Activated CD4-positive, alpha-beta T cell treated with anti-CD3 and anti-CD28 coated beads for 36 hours (primary cell): ENCODE measurements at regions of chr20 and their contacts with region 1.

Region 1: GRCh38 chr20:8131598-8132483 is at the start of gene PLCB1:
- DNase-seq: peak; percentile 89
- ATAC-seq: peak; percentile 90
- H3K4me3 Mint-ChIP-seq: peak within 1 kb of the TSS; percentile 68
- H3K27ac Mint-ChIP-seq: no peak within 1 kb of the TSS
- H3K4me1 Mint-ChIP-seq: peaks cover 17% of the 10 kb centered on the region
- H3K27me3 Mint-ChIP-seq: peaks cover 30% of the 10 kb centered on the region
- total RNA-seq, gene PLCB1: 1.4 to 1.5 TPM

Region 2: GRCh38 chr20:8019246-8019997 is 112.4 kb before region 1 on chr20 and contains the start of gene TMX4:
- CTCF ChIA-PET with region 1: no interaction called
- POLR2A ChIA-PET with region 1: no interaction called
- intact Hi-C with region 1: loop called in 1 of 2 experiments (anchors 2 kb)
- DNase-seq: peak; percentile 94
- ATAC-seq: peak; percentile 84
- H3K4me3 Mint-ChIP-seq: peak within 1 kb of the TSS; percentile 85
- H3K27ac Mint-ChIP-seq: peak within 1 kb of the TSS; percentile 75
- H3K4me1 Mint-ChIP-seq: peaks cover 24% of the 10 kb centered on the region
- H3K27me3 Mint-ChIP-seq: no peaks in the 10 kb centered on the region
- total RNA-seq, gene TMX4: 19.2 to 25.9 TPM

Region 3: DNA sequence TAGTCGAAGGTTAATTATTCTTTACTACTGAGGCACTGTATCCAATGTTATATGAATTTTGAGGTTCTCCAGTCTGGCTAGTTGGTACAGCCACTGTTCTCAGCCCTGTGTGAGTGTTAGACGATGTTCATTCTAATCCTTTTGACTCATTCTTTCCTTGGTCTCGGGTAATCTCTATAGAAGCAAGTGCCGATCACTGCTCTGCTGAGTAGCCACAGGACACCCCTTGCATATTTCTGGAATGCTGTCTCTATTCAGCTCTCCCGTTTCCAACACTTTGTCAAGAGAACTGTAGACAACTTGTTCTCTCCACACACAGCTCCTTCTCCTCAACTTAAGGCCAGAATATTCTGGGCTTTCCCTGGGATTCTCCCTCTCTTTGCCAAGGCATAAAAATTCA is 42.2 kb before region 1 on chr20:
- CTCF ChIA-PET with region 1: no interaction called
- POLR2A ChIA-PET with region 1: no interaction called
- intact Hi-C with region 1: no loop called
- DNase-seq: no peak
- ATAC-seq: no peak
- H3K4me3 Mint-ChIP-seq: no peak overlapping the region
- H3K27ac Mint-ChIP-seq: no peak overlapping the region
- H3K4me1 Mint-ChIP-seq: no peaks in the 10 kb centered on the region
- H3K27me3 Mint-ChIP-seq: peaks cover 6% of the 10 kb centered on the region

Region 4: GRCh38 chr20:8213831-8214587 is 82.2 kb after region 1 on chr20:
- CTCF ChIA-PET with region 1: no interaction called
- POLR2A ChIA-PET with region 1: no interaction called
- intact Hi-C with region 1: loop called in 1 of 2 experiments (anchors 5 kb)
- DNase-seq: peak; percentile 13
- ATAC-seq: peak; percentile 81
- H3K4me3 Mint-ChIP-seq: peak overlapping the region; percentile 53
- H3K27ac Mint-ChIP-seq: peak overlapping the region; percentile 80
- H3K4me1 Mint-ChIP-seq: peaks cover 55% of the 10 kb centered on the region
- H3K27me3 Mint-ChIP-seq: no peaks in the 10 kb centered on the region

Region 5: DNA sequence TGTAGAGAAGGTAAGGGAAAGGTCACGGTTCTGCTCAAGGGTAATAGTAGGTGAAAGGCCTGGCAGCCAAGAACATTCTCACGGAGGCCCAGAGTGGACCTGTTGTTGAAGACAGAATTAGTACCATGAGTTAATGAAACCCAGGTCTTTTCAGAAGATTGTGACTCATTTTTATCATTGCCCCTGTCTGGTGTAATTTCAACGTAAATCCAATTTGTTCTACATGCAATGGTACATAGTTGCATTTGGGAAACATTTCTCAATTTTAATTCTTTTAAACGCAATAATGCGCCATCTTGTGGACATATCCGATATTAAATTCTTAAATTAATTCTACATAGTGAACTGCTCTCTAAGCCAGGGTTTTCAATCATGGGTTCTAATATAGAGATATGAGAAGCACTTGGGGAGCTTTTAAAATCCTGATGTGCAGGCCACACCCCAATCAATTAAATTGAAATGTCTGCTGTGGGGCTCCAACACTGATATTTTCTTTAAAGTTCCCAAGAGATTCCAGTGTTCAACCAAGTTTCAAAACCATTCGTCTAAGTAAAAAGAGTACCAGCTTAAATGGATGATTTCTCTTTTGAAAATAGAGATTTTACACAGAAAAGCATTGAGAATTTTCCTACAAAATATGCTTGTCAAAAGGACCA is 257.7 kb after region 1 on chr20:
- CTCF ChIA-PET with region 1: interaction called, 13 read pairs
- POLR2A ChIA-PET with region 1: no interaction called
- intact Hi-C with region 1: loop called (anchors 1 kb)
- DNase-seq: no peak
- ATAC-seq: no peak
- H3K4me3 Mint-ChIP-seq: no peak overlapping the region
- H3K27ac Mint-ChIP-seq: no peak overlapping the region
- H3K4me1 Mint-ChIP-seq: no peaks in the 10 kb centered on the region
- H3K27me3 Mint-ChIP-seq: peaks cover 2% of the 10 kb centered on the region

Region 6: DNA sequence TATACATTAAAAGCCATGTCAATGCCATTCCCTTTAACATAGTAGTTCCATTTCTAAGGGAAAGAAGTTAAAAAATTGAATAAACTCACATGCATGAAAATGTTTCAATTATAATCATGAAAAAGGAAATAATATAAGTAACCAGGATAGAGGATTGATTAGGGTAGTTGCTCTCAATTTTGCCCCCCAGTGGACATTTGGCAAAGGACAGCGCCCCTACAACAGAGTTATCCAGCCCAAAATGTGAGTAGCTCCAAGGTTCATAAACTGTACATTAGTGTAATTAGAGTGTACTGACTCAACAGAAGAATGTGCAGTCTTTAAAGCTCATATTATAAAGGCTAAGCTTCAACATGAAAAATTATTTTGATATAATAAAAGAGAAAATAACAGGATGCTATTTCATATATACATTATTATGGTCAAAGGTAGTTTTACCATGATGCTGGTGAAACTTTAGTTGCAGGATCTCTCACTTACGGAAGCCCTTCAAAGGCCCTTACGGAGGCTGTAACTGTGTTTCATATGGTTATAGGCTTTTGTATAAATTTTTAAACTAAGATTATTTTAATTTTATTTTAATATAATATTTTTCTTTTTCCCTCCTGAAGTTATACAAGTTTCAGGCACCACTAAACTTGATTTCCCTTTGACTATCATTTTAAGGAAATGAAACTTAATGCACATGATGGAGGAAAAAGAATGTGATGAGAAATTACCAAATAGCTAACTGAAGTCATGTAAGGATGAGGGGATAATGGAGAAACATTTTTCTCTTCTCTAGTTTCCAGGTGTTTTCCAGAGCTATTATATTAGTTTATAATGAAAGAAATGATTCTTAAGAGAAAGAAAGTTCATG is 403.8 kb after region 1 on chr20:
- CTCF ChIA-PET with region 1: no interaction called
- POLR2A ChIA-PET with region 1: no interaction called
- intact Hi-C with region 1: loop called in 1 of 2 experiments (anchors 5 kb)
- DNase-seq: peak; percentile 16
- ATAC-seq: no peak
- H3K4me3 Mint-ChIP-seq: no peak overlapping the region
- H3K27ac Mint-ChIP-seq: no peak overlapping the region
- H3K4me1 Mint-ChIP-seq: no peaks in the 10 kb centered on the region
- H3K27me3 Mint-ChIP-seq: no peaks in the 10 kb centered on the region

Region 7: DNA sequence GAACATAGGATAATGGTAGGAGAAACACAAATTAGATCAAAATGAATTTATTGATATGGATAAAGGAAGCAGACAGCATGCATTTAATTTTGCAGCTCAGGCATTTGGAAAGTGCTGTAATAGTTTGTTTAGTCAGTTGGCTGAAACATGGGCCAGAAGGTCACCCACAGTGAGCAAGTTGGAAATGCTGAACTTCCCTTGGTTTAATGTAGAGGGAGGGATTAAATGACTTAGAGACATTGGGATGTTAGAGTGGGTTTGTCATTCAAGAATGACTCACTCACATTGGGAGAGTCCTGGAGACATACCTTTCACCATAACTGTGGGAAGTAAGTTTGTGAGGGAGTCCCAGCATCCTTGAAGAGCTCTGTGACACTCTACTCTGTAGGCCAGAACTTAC is 705.6 kb after region 1 on chr20:
- CTCF ChIA-PET with region 1: no interaction called
- POLR2A ChIA-PET with region 1: no interaction called
- intact Hi-C with region 1: no loop called
- DNase-seq: no peak
- ATAC-seq: no peak
- H3K4me3 Mint-ChIP-seq: no peak overlapping the region
- H3K27ac Mint-ChIP-seq: no peak overlapping the region
- H3K4me1 Mint-ChIP-seq: no peaks in the 10 kb centered on the region
- H3K27me3 Mint-ChIP-seq: peaks cover 2% of the 10 kb centered on the region